Mucosa of descending colon (tissue), 3 donors: ENCODE measurements at regions of chr3 and their contacts with region 1.

Region 1: GRCh38 chr3:189148081-189148507 is 23.7 kb upstream of the TPRG1 start:
- DNase-seq: peak in 2 of 3 donors; percentile 56 to 79
- ATAC-seq: peak; percentile 86
- H3K4me3 ChIP-seq: no peak overlapping the region
- H3K4me1 ChIP-seq: no peaks in the 10 kb centered on the region
- CTCF ChIP-seq: peak; percentile 43

Region 2: DNA sequence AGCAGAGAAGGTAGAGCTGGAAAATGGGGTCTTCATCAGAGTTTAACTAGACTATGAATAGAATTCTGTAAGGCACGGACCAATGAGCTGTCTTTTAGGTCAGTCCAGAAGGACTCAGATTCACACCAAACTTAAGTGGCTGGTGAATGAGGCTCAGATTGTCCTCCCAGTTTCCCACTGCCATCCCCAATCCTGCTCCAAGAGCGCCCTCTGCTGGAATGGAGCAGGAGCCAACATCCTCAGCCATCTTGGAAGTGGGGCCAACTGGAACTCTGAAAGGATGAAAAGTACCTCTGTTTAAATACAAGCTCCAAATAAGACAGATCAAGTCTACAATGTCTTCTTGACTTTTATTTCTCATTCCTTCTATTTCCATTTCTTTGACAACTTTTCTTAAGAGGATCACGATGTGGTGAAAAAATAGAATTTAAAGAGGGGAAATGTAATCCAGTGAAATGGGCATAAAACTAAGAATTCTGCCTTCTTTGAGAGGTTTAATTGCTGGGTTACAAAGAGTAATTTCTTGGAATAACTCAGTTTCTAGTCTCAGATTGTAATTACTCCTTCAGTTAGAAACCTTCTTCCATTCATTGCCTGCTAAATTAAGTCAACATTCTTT is 193.4 kb before region 1 on chr3:
- intact Hi-C with region 1: loop called in 1 of 2 experiments (anchors 5 kb)
- DNase-seq: peak; percentile 76 to 83 (median 80)
- ATAC-seq: peak; percentile 80
- H3K4me3 ChIP-seq: no peak overlapping the region
- H3K4me1 ChIP-seq: peaks cover 7% of the 10 kb centered on the region
- CTCF ChIP-seq: peak; percentile 91